CD8-positive, alpha-beta T cell (primary cell): ENCODE measurements at regions of chr1 and their contacts with region 1.

Region 1: GRCh38 chr1:7070389-7071029 is 285.3 kb downstream of the CAMTA1 start:
- DNase-seq: peak; percentile 15 to 66 (median 48)
- ATAC-seq: no peak
- H3K4me3 ChIP-seq: no peak overlapping the region
- H3K4me3 Mint-ChIP-seq: no peak overlapping the region
- H3K27ac ChIP-seq: no peak overlapping the region
- H3K27ac Mint-ChIP-seq: no peak overlapping the region
- H3K4me1 ChIP-seq: peaks cover 4% of the 10 kb centered on the region
- H3K4me1 Mint-ChIP-seq: peaks cover 4% of the 10 kb centered on the region
- H3K27me3 ChIP-seq: no peaks in the 10 kb centered on the region
- H3K27me3 Mint-ChIP-seq: peaks cover 24% of the 10 kb centered on the region
- CTCF ChIP-seq: peak; percentile 63

Region 2: DNA sequence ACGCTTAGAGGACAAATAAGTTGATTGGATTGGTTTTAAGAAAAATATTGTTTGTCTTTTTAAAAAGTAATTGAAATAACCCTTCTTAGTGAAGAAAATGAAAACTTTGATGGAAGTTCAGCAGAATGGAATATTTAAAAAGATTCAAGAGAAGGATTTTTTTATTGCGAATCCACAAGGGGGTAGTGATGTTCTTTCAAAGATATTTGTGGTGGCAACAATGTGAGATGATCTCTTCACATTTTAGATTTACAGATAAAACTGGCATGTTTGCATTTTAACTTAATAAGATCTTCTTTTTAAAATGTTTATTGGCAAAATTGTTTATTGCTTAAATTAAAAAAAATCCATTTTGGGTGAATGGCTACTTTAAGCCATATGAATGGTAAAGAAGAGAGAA is 276.3 kb before region 1 on chr1:
- CTCF ChIA-PET with region 1: interaction called, 11 read pairs
- POLR2A ChIA-PET with region 1: no interaction called
- intact Hi-C with region 1: loop called in 1 of 2 experiments (anchors 2 kb)
- DNase-seq: peak in 2 of 9 experiments; percentile 39 to 58
- ATAC-seq: no peak
- H3K4me3 ChIP-seq: no peak overlapping the region
- H3K4me3 Mint-ChIP-seq: no peak overlapping the region
- H3K27ac ChIP-seq: no peak overlapping the region
- H3K27ac Mint-ChIP-seq: no peak overlapping the region
- H3K4me1 ChIP-seq: no peaks in the 10 kb centered on the region
- H3K4me1 Mint-ChIP-seq: peaks cover 47% of the 10 kb centered on the region
- H3K27me3 ChIP-seq: no peaks in the 10 kb centered on the region
- H3K27me3 Mint-ChIP-seq: no peaks in the 10 kb centered on the region
- CTCF ChIP-seq: peak; percentile 45

Region 3: DNA sequence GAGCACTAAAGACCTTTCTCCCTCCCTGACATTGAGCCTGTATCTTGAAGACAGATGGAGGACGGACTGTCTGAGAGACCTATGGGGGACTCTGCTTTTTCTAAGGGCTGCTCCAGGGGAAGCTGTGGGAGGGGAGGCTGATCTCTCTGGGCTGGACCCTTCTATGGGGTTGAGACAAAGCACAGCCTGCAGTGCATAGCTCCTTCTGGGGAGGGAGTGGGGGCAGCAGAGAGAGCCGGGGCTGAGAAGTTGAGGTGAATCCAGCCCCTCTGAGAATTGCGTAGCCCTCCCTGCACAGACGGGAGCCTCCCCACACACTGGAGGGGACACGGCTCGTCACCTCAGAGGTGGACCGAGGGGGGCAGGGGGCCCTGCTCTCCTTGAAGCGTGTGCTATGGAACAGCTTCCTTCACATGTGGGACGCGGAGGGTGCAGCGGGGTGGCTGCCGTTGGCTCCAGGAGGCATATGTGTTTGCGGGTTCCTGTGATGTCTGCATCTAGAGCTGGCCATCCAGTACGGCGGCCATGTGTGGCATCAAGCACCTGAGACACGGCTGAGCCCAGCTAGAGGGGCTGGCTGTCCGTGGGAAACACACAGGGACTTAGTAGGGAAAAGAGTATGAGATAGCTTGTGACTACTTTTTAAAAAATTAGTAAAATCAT is 13.9 kb after region 1 on chr1:
- CTCF ChIA-PET with region 1: interaction called, 14 read pairs
- POLR2A ChIA-PET with region 1: no interaction called
- intact Hi-C with region 1: no loop called
- DNase-seq: no peak
- ATAC-seq: no peak
- H3K4me3 ChIP-seq: no peak overlapping the region
- H3K4me3 Mint-ChIP-seq: no peak overlapping the region
- H3K27ac ChIP-seq: no peak overlapping the region
- H3K27ac Mint-ChIP-seq: no peak overlapping the region
- H3K4me1 ChIP-seq: no peaks in the 10 kb centered on the region
- H3K4me1 Mint-ChIP-seq: no peaks in the 10 kb centered on the region
- H3K27me3 ChIP-seq: peaks cover 0 to 2% of the 10 kb centered on the region in 2 experiments
- H3K27me3 Mint-ChIP-seq: peaks cover 3% of the 10 kb centered on the region
- CTCF ChIP-seq: no peak

Region 4: DNA sequence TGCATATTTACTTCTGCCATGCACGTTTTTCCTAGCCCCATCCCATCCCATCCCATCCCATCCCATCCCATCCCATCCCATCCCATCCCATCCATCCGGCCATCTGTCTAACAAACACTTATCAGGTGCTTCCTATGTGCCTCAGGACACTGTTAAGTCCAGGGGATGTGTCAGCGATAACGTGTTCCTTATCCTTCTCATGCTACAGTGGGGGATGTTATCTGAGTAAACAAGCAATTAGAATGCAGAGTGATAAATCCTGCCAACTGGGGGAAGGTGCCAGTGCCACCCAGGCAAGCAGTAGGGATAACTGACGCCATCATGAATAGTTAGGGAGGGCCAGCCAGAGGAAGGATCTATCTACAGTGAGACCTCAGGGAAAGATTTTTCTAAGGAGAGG is 19.0 kb after region 1 on chr1:
- CTCF ChIA-PET with region 1: interaction called, 10 read pairs
- POLR2A ChIA-PET with region 1: no interaction called
- intact Hi-C with region 1: no loop called
- DNase-seq: no peak
- ATAC-seq: no peak
- H3K4me3 ChIP-seq: no peak overlapping the region
- H3K4me3 Mint-ChIP-seq: no peak overlapping the region
- H3K27ac ChIP-seq: no peak overlapping the region
- H3K27ac Mint-ChIP-seq: no peak overlapping the region
- H3K4me1 ChIP-seq: no peaks in the 10 kb centered on the region
- H3K4me1 Mint-ChIP-seq: no peaks in the 10 kb centered on the region
- H3K27me3 ChIP-seq: peaks cover 0 to 2% of the 10 kb centered on the region in 2 experiments
- H3K27me3 Mint-ChIP-seq: peaks cover 3% of the 10 kb centered on the region
- CTCF ChIP-seq: no peak